Vagina (tissue), 2 donors: ENCODE measurements at regions of chr7 and their contacts with region 1.

Region 1: GRCh38 chr7:129089521-129090212 is 34.8 kb upstream of the TNPO3 start:
- DNase-seq: no peak
- H3K4me3 ChIP-seq: no peak overlapping the region
- H3K27ac ChIP-seq: no peak overlapping the region
- H3K4me1 ChIP-seq: no peaks in the 10 kb centered on the region
- H3K27me3 ChIP-seq: no peaks in the 10 kb centered on the region
- CTCF ChIP-seq: no peak
- POLR2A ChIP-seq: no peak

Region 2: DNA sequence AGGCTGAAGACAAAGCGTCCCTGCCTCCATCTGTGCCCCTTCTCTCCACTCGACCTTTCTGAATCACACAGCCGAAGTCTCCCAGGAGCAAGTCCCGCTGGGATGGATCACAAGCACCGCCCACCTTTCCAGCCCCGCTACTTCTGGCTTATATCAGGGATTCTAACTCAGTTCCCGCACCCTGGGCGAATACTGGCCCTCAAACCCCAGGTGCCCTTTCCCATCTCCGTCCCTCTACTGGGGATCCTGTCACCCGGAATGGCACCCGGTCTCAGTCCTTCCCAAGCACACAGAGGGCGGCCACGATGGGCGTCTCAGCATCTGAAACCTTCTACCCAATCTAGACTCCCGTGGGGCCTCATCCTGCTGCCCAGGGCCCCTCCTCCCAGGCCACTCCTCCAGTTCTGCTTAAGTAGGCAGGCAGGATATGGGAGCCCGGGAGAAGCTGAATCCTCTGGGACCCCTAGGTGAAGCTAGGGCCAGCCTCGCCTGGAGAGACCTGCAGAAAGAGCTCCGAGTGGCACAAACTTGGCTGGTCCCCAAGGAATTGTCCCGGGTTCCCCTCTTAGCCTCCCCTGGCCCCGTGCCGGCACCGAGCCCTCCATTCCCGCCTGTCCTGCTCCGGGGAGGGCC is 179.9 kb before region 1 on chr7:
- intact Hi-C with region 1: loop called (anchors 10 kb)
- DNase-seq: no peak
- H3K4me3 ChIP-seq: peak overlapping the region; percentile 10 to 40
- H3K27ac ChIP-seq: no peak overlapping the region
- H3K4me1 ChIP-seq: peaks cover 16% of the 10 kb centered on the region
- H3K27me3 ChIP-seq: no peaks in the 10 kb centered on the region
- CTCF ChIP-seq: no peak
- POLR2A ChIP-seq: no peak

Region 3: GRCh38 chr7:129122751-129123509 is 33.3 kb after region 1 on chr7:
- intact Hi-C with region 1: no loop called
- DNase-seq: no peak
- H3K4me3 ChIP-seq: no peak overlapping the region
- H3K27ac ChIP-seq: no peak overlapping the region
- H3K4me1 ChIP-seq: no peaks in the 10 kb centered on the region
- H3K27me3 ChIP-seq: no peaks in the 10 kb centered on the region
- CTCF ChIP-seq: no peak
- POLR2A ChIP-seq: no peak